Endothelial cell of umbilical vein (primary cell): ENCODE measurements at regions of chr7 and their contacts with region 1.

Region 1: DNA sequence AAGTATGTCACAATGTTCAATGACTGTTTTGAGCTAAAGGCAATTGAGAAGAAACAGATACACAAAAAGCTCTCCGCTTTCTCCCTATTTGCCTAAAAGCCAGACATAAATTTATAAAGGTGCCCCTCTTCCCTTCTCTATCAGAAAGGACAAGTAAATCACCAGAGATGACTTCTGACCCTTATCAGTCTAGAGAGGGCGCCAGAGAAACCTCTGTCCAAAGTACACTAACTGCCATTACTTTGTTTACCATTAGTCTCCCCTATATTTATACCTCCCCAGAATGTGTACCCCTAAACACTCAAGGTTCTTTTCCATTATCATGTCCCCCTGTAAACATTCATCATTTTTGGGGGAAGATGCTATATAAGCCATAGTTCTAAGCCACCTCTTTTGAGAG is 49.3 kb downstream of the TPK1 start:
- DNase-seq: no peak
- H3K4me3 ChIP-seq: no peak overlapping the region
- H3K27ac ChIP-seq: no peak overlapping the region
- H3K4me1 ChIP-seq: no peaks in the 10 kb centered on the region
- H3K27me3 ChIP-seq: no peaks in the 10 kb centered on the region
- CTCF ChIP-seq: no peak
- POLR2A ChIP-seq: no peak

Region 2: DNA sequence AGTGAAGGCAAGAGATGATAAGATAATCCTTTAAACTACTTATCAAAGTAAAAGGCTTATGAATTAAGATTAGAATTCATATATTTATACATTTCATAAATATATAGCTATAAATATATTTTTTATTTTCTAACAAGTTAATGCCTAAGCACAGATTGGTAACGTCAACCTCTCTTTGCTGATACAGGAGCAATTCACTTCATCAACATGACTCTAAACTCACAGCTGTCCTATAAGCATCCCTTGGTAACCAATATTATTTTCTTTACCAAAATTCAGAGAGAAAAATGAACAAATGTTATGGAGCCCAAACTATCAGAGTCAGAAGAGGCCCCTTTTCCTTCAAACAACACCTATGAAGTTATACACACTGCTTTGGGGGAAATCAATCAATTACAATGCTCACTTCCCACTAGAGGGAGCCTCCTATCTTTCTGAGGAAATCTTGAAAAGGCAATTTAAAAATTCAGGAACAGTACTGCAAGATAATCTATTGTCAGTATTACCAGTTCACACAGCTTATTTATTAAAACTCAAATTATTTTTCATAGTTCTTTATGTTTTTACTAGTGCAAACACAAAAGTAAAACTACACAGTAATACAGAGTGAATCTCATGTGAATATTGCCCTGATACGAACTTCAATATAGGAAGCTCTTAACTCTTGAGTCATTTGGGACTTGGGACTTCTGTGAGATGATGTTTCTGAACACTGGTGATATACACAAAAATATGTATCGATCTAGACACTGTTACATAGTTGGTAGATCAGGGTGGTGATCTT is 332.1 kb before region 1 on chr7:
- CTCF ChIA-PET with region 1: interaction called, 21 read pairs
- POLR2A ChIA-PET with region 1: no interaction called
- dilution Hi-C with region 1: no loop called
- intact Hi-C with region 1: loop called (anchors 2 kb)
- DNase-seq: peak; percentile 29
- H3K4me3 ChIP-seq: no peak overlapping the region
- H3K27ac ChIP-seq: no peak overlapping the region
- H3K4me1 ChIP-seq: no peaks in the 10 kb centered on the region
- H3K27me3 ChIP-seq: no peaks in the 10 kb centered on the region
- CTCF ChIP-seq: peak; percentile 22 to 34
- POLR2A ChIP-seq: no peak

Region 3: DNA sequence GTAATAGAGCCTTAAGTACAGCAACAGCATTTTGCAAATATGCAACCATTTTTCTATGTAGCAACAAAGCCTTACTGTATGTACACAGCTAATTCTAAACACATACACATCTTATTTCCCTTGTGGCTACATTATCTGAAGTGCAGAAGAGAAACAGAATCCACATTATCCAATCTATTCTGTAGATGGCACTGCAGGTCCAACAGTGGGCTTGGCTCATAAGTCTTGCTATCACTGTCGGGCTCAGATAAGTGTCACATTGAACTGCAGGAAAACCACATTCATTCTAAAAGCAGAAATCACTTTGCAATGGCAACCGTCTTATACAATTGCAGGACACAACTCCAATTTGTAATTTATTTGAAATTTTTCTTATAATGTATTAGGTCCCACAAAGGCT is 273.2 kb before region 1 on chr7:
- CTCF ChIA-PET with region 1: interaction called, 4 read pairs
- POLR2A ChIA-PET with region 1: no interaction called
- dilution Hi-C with region 1: no loop called
- intact Hi-C with region 1: loop called (anchors 2 kb)
- DNase-seq: peak; percentile 65
- H3K4me3 ChIP-seq: no peak overlapping the region
- H3K27ac ChIP-seq: no peak overlapping the region
- H3K4me1 ChIP-seq: no peaks in the 10 kb centered on the region
- H3K27me3 ChIP-seq: no peaks in the 10 kb centered on the region
- CTCF ChIP-seq: peak in 1 of 2 donors; percentile 37
- POLR2A ChIP-seq: no peak

Region 4: DNA sequence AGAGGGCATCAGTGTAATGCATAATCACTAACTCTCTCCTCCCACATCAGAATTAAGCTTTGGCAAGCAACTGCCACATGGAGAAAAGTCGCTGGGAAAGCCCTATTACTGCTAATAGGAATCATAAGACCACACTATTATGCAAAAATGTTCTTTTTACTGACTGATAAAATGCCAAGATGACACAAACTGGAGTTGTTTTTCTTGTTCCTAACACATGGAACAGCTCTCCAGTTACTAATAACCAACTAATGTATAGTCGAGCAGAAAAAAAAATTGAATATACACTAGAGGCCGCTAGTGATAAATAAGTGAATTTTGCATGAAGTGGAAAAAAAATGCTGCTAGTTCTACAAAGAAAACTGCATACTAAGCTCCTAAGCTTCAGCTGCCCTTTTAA is 116.3 kb before region 1 on chr7:
- CTCF ChIA-PET with region 1: interaction called, 10 read pairs
- POLR2A ChIA-PET with region 1: no interaction called
- dilution Hi-C with region 1: no loop called
- intact Hi-C with region 1: no loop called
- DNase-seq: peak; percentile 21
- H3K4me3 ChIP-seq: no peak overlapping the region
- H3K27ac ChIP-seq: no peak overlapping the region
- H3K4me1 ChIP-seq: no peaks in the 10 kb centered on the region
- H3K27me3 ChIP-seq: no peaks in the 10 kb centered on the region
- CTCF ChIP-seq: no peak
- POLR2A ChIP-seq: no peak

Region 5: DNA sequence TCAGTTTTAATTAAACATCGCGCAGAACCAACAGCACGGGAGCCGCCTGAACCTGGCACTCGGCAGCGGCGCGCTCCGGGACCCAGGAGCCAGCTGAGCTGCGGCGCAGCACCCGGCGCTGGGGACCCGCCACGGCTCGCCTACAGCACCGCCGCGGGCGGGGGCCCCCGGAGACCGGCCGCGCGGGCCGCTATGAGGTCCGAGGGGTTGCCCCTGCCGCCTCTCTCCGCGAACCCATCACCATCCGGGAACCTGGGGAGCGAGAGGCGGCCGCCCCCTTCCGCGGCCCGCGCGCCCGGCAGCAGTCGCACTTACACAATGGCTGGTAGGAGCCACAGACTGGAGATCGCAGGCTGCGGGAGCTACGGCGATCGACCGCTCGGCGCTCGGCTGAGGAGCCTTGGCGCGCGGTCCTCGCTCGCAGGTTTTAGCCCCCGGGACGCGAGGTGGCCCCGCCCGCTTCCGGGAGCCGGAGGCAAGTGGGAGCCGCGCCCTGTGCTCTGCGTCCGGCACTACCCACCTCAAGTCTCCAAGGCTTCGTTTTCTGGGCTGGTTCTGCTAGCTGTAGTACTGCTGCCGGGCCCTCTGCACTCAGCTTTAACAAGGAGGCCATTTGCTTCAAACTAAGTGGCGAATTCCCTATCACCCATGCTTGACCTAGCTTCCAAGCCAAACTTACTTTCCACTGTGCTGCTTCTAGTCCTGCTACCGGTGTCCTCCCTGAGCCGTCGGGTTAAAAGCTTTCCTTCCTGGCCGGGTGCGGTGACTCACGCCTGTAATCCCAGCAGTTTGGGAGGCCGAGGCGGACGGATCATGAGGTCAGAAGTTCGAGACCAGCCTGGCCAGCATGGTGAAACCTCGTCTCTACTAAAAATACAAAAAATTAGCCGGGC is 49.4 kb after region 1 on chr7 and contains the start of gene TPK1:
- CTCF ChIA-PET with region 1: interaction called, 3 read pairs
- POLR2A ChIA-PET with region 1: interaction called, 4 read pairs
- dilution Hi-C with region 1: no loop called
- intact Hi-C with region 1: loop called (anchors 1 kb)
- DNase-seq: peak; percentile 97
- H3K4me3 ChIP-seq: peak within 1 kb of the TSS; percentile 45 to 97 (median 96)
- H3K27ac ChIP-seq: peak within 1 kb of the TSS; percentile 96
- H3K4me1 ChIP-seq: peaks cover 5% of the 10 kb centered on the region
- H3K27me3 ChIP-seq: no peaks in the 10 kb centered on the region
- CTCF ChIP-seq: no peak
- POLR2A ChIP-seq: peak; percentile 82
- total RNA-seq, gene TPK1: 8.3 and 9.3 TPM in 2 replicates

Region 6: DNA sequence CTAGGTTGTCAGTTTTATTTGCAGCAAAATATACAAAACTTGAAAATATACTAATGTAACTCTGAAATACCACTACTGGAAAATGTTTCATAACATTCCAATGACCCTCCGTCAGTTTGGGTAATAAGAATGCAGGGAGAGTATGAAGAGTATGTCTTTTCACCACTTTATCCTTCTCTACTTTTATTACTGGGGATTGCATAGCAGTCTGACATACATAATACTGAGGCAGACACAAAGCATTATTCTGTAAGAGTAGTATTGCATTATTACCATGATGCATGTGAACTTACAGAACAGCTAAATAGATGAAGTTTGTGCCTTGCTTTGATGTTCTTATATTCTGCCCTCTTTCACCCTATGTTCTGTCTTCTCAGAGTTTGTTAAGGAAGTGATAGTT is 201.2 kb after region 1 on chr7:
- CTCF ChIA-PET with region 1: no interaction called
- POLR2A ChIA-PET with region 1: no interaction called
- dilution Hi-C with region 1: no loop called
- intact Hi-C with region 1: no loop called
- DNase-seq: no peak
- H3K4me3 ChIP-seq: no peak overlapping the region
- H3K27ac ChIP-seq: no peak overlapping the region
- H3K4me1 ChIP-seq: no peaks in the 10 kb centered on the region
- H3K27me3 ChIP-seq: no peaks in the 10 kb centered on the region
- CTCF ChIP-seq: no peak
- POLR2A ChIP-seq: no peak